GM13977 (cell line): ENCODE measurements at regions of chr12 and their contacts with region 1.

Region 1: GRCh38 chr12:10140001-10140400 is 10.0 kb upstream of the CLEC7A start:
- DNase-seq: peak; percentile 38
- CTCF ChIP-seq: peak; percentile 57

Region 2: GRCh38 chr12:9741726-9742125 is 398.3 kb before region 1 on chr12:
- in situ Hi-C with region 1: loop called (anchors 10 kb)
- DNase-seq: peak; percentile 57
- CTCF ChIP-seq: no peak

Region 3: DNA sequence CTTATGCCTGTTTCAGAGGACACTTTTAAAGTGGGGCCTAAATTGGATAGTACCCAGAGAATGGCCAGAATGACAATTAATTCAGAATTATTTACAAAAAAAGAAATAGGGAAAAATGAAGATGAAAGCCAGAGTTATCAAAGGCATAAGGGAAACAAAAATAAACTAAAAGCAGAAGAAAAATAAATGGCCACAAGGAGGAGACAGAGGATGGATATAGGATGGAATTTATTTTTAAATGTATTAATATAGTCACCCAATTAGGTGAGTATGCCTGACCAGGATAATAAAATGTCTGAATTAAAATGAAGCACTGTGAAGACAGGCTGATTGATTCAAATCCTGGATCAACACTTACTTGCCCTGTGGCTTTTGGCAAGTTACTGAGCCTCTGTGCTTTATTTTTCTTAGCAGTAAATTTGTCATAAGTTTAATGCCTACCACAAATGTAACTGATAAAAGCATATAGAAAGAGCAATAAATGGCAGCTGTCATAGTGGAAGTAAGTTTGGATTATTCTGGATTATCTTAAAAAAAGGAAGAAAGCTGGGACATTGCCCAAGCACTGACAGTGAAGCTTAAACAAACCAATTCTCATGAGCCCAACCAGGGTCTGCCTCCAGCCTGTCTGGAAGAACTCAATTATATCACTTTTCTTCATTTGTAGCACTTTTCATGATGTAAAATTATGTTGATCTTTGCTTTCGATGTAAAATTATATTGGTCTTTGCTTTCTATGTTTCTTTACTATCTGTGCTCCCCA is 106.0 kb before region 1 on chr12:
- in situ Hi-C with region 1: loop called (anchors 25 kb)
- DNase-seq: peak; percentile 32
- CTCF ChIP-seq: peak; percentile 49